H1 (cell line): ENCODE measurements at regions of chr4 and their contacts with region 1.

Region 1: DNA sequence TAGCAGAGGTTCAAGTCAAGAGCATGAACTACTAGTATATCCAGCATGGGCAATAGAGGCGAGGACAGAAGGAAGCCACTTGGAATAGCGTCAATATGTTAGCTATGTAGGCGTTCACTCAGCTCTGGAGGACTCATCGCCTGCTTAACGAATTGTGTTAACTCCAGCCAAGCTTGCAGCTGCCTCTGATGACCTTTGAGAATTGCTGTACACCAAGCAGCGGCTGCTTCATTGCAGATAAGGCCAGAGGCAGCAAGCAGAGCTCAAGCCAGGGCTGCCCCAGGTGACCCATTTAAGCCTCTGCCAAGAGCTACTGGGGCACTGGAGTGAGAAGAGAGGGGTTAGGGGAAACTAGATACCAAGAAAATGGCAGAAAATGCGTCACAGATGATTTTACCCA is 160.2 kb upstream of the IGFBP7 start:
- DNase-seq: no peak
- H3K4me3 ChIP-seq: no peak overlapping the region
- H3K27ac ChIP-seq: no peak overlapping the region
- H3K4me1 ChIP-seq: peaks cover 0 to 6% (median under 1%) of the 10 kb centered on the region in 4 experiments; a peak in 1 of 7 replicates
- H3K27me3 ChIP-seq: no peaks in the 10 kb centered on the region
- CTCF ChIP-seq: no peak
- EP300 ChIP-seq: no peak
- POLR2A ChIP-seq: no peak
- RAD21 ChIP-seq: no peak

Region 2: GRCh38 chr4:57280481-57280880 is 10.1 kb after region 1 on chr4:
- CTCF ChIA-PET with region 1: interaction called, 13 read pairs
- POLR2A ChIA-PET with region 1: no interaction called
- DNase-seq: no peak
- H3K4me3 ChIP-seq: no peak overlapping the region
- H3K27ac ChIP-seq: no peak overlapping the region
- H3K4me1 ChIP-seq: peaks cover 0 to 5% (median 2%) of the 10 kb centered on the region in 4 experiments; a peak in 2 of 7 replicates
- H3K27me3 ChIP-seq: no peaks in the 10 kb centered on the region; a peak in 1 of 7 replicates
- CTCF ChIP-seq: no peak
- EP300 ChIP-seq: no peak
- POLR2A ChIP-seq: no peak
- RAD21 ChIP-seq: no peak

Region 3: GRCh38 chr4:57303012-57303751 is 32.8 kb after region 1 on chr4:
- CTCF ChIA-PET with region 1: no interaction called
- POLR2A ChIA-PET with region 1: no interaction called
- DNase-seq: no peak
- H3K4me3 ChIP-seq: no peak overlapping the region
- H3K27ac ChIP-seq: no peak overlapping the region
- H3K4me1 ChIP-seq: no peaks in the 10 kb centered on the region
- H3K27me3 ChIP-seq: no peaks in the 10 kb centered on the region
- CTCF ChIP-seq: peak in 2 of 3 experiments; percentile 7 to 18; a peak in 1 of 4 replicates
- EP300 ChIP-seq: no peak
- POLR2A ChIP-seq: no peak
- RAD21 ChIP-seq: peak; percentile 20 to 41; a peak in 3 of 4 replicates